GM10248 (cell line): ENCODE measurements at regions of chr1 and their contacts with region 1.

Region 1: GRCh38 chr1:223811634-223812415 is 33.9 kb downstream of the TP53BP2 start:
- DNase-seq: no peak
- CTCF ChIP-seq: peak; percentile 53

Region 2: DNA sequence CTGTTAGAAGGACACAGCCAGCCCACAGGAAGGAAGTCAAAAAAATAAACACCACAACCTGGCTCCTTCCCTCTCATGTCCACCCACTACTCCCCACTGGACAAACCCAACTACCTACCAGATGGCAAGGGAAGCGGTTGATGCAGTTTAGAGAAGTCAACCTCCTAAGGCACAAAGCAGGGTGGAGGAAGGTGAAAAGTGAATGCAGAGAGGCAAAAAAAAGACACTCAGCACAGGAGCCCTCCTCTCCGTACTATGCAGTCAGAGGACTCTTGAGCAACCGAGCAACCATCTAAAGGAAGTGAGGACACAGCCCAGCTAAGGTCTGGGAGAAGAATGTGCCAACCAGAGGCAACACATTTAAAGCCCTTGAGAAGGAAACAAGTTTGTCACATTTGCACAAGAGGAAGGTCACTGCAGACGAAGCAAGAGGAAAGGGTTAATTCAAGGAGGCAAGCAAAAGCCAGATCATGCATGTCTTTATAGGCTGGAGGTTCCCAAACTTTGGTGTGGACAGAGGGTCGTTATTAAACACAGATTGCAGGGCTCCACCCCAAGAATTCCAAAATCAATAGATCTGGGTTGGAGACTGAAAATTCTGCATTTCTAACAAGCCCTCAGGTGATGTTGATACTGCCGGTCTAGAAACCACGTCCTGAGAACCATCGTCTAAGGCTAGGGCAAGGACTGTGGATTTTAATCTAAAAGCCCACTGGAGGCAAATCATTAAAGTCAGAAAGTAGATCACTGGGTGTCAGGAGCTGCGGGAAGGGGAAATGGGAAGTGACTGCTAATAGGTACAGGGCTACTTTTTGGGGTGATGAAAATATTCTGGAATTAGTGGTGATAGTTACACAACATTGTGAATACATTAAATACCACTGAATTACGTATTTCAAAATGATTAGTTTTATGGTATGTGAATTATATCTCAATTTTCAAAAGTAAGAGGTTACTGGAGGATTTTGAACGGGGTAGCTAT is 14.2 kb after region 1 on chr1:
- CTCF ChIA-PET with region 1: interaction called, 28 read pairs
- POLR2A ChIA-PET with region 1: no interaction called
- DNase-seq: no peak
- CTCF ChIP-seq: no peak